Right cardiac atrium (tissue), 5 donors: ENCODE measurements at regions of chr6 and their contacts with region 1.

Region 1: DNA sequence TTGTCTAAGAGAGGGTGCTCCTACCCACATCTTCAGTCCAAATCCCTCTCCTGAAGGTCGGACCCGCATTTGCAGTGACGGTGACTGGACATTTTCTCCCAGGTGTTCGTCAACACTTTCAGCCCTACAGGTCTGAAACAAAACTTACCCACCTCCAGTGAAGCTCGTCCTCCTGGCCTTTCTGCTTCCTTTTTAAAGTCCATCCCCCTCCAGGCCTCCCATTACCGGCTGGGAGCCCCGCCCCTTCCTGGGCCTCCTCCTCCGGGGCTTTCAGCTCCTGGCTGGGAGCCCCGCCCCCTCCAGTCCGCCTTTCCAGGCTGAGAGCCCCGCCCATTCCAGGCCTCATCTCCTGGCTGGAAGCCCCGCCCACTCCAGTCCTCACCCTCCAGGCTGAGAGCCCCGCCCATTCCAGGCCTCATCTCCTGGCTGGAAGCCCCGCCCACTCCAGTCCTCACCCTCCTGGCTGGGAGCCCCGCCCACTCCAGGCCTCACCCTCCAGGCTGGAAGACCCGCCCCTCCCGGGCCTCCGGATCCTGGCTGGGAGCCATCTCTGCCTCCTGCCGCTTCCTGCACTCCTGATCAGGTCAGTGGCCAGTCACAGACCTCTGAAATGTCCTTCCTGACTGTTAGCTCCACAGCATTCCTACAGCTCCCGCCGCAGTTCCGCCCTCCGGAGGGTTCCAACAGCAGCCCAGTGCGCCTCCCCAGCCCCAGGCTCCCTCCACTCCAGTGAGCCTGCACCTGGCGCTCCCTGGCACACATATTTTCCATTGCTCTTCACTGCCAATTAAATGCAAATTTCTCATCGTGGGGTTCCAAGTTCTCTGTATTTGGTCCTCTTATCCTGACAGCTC is 98.5 kb downstream of the LY86 start:
- DNase-seq: peak; percentile 92 to 97 (median 96)
- ATAC-seq: peak; percentile 89 to 90
- H3K4me3 ChIP-seq: peak overlapping the region; percentile 4
- H3K27ac ChIP-seq: peak overlapping the region; percentile 57
- H3K4me1 ChIP-seq: peaks cover 14% of the 10 kb centered on the region
- H3K27me3 ChIP-seq: no peaks in the 10 kb centered on the region

Region 2: GRCh38 chr6:6724539-6725467 is 37.8 kb after region 1 on chr6:
- intact Hi-C with region 1: loop called in 1 of 4 experiments (anchors 5 kb)
- DNase-seq: peak; percentile 78 to 94 (median 84)
- ATAC-seq: peak; percentile 88 to 90
- H3K4me3 ChIP-seq: peak overlapping the region; percentile 26
- H3K27ac ChIP-seq: peak overlapping the region; percentile 89
- H3K4me1 ChIP-seq: peaks cover 12% of the 10 kb centered on the region
- H3K27me3 ChIP-seq: no peaks in the 10 kb centered on the region